PC-9 (cell line): ENCODE measurements at regions of chr13 and their contacts with region 1.

Region 1: GRCh38 chr13:97221989-97222700 is at the start of gene MBNL2:
- DNase-seq: peak; percentile 87 to 92
- H3K4me3 ChIP-seq: peak within 1 kb of the TSS; percentile 81
- H3K27ac ChIP-seq: peak within 1 kb of the TSS; percentile 85
- H3K4me1 ChIP-seq: peaks cover 48% of the 10 kb centered on the region
- H3K27me3 ChIP-seq: no peaks in the 10 kb centered on the region
- CTCF ChIP-seq: no peak
- total RNA-seq, gene MBNL2: 57.7 and 91.3 TPM in 2 replicates

Region 2: GRCh38 chr13:97030705-97031452 is 191.3 kb before region 1 on chr13:
- CTCF ChIA-PET with region 1: no interaction called
- POLR2A ChIA-PET with region 1: no interaction called
- intact Hi-C with region 1: no loop called
- DNase-seq: peak; percentile 2 to 66
- H3K4me3 ChIP-seq: no peak overlapping the region
- H3K27ac ChIP-seq: no peak overlapping the region
- H3K4me1 ChIP-seq: no peaks in the 10 kb centered on the region; the same call in 1 of the 2 replicates
- H3K27me3 ChIP-seq: no peaks in the 10 kb centered on the region
- CTCF ChIP-seq: peak; percentile 57

Region 3: DNA sequence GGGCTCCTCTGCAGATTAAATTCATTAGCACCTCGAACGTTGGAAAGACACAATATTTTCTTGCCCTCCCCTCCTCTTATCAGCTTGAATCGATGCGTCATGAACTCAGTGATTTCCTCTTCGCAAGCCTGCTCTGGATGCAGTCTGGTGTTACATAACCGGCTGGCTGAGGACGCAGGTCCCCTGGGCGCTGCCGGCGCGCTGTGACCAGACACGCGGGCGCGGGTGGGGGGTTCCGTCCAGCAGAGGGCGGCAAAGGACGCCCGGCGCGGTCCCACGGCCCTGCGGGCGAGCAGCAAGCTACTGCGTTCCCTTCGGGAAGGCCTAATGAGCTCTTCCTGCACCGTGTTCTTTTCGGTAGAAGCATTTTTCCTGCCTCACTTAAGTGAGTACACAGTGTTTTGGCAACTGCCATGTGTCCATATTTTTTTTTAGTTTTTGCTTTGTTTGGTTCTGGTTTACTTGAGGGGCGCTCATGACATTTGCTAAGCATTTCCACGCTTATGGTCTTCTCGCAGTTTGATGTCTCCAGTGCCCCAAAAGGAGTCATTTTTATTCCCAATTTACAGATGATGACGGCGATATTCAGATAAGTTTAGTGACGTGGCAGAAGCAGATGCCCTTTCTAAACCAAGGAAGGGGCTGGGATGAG is 112.2 kb before region 1 on chr13:
- CTCF ChIA-PET with region 1: interaction called, 12 read pairs
- POLR2A ChIA-PET with region 1: interaction called, 9 read pairs
- intact Hi-C with region 1: loop called (anchors 1 kb)
- DNase-seq: peak; percentile 95 to 96
- H3K4me3 ChIP-seq: peak overlapping the region; percentile 21; the same call in 1 of the 2 replicates
- H3K27ac ChIP-seq: peak overlapping the region; percentile 35; the same call in 1 of the 2 replicates
- H3K4me1 ChIP-seq: peaks cover 17% of the 10 kb centered on the region
- H3K27me3 ChIP-seq: no peaks in the 10 kb centered on the region
- CTCF ChIP-seq: peak; percentile 96

Region 4: DNA sequence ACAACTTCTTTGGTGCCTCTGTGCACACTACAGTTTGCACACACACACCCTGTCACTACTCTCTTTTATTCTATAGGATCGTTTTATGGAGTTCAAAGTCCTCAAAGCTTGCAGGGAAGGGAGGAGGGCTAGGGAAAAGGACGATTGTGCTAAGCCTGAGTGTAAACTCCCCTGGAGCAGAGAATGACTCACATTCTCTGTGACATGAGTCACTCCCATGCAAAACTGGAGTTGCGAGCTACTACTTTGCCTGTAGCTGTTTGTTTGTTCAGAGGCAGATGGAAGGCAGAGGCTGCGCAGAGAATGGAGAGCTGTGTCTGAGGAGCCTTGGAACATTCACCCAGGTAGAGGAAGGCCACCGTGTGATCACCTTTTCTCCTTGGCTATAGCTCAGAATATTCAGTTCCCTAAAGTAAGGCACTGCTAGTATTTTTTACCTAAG is 80.6 kb before region 1 on chr13:
- CTCF ChIA-PET with region 1: no interaction called
- POLR2A ChIA-PET with region 1: interaction called, 6 read pairs
- intact Hi-C with region 1: loop called (anchors 2 kb)
- DNase-seq: peak; percentile 70 to 95
- H3K4me3 ChIP-seq: peak overlapping the region; percentile 62
- H3K27ac ChIP-seq: peak overlapping the region; percentile 79
- H3K4me1 ChIP-seq: peaks cover 51% of the 10 kb centered on the region
- H3K27me3 ChIP-seq: no peaks in the 10 kb centered on the region
- CTCF ChIP-seq: no peak

Region 5: DNA sequence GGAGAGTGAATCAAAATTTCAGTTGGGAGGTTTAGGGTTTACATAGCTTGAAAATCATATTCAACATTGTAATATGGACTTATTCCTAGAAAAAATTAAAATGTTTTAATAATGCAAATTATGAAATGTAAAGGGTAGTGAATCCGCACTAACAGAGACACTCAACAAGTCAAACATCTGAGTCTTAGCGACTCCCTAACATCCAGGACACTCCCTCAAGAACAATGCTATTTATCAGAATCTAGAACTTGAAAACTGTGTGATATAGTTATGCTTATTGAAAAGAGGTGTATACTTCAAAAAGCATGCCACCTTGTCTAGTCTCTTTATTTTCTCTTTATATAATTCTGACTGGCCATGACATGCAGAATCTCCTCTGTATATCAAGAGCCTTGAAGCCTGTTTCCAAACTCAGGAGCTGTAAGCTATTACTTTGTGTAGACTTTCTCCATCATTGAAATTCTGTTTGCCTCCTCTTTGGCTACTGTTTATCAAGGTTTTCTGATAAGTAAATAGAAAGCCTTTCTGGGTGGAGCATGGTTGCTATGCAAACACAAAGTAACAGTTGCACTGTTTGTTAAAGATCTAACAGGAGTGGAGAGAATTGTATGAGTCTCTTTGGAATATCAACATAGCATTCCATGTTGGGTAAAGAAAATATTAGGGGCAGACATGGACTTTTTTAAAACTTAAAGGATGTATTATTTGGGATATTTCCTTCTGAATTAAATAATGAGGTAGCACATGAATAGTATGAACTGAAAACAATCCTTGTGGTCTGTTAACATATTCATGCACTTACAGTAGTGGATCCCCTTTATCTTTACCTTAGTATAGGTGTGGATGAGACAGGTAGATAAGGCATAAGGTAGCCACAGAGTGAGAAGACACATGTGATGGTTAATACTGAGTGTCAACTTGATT is 56.4 kb before region 1 on chr13:
- CTCF ChIA-PET with region 1: no interaction called
- POLR2A ChIA-PET with region 1: no interaction called
- intact Hi-C with region 1: no loop called
- DNase-seq: peak in 1 of 2 experiments; percentile 47
- H3K4me3 ChIP-seq: no peak overlapping the region
- H3K27ac ChIP-seq: no peak overlapping the region
- H3K4me1 ChIP-seq: peaks cover 8% of the 10 kb centered on the region
- H3K27me3 ChIP-seq: no peaks in the 10 kb centered on the region
- CTCF ChIP-seq: no peak

Region 6: DNA sequence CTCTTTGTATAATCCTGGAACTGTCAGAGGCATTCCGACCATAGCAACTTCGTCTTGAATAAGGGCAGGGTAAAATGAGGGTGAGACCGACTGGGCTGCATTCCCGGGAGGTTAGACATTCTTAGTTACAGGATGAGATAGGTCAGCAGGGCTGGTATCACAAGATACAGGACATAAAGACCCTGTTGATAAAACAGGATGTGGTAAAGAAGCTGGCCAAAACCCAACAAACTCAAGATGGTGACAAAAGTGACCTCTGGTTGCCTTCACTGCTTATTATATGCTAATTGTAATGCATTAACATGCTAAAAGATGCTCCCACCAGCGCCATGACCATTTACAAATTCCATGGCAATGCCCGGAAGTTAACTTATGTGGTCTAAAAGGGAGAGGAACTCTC is 27.7 kb before region 1 on chr13:
- CTCF ChIA-PET with region 1: no interaction called
- POLR2A ChIA-PET with region 1: interaction called, 7 read pairs
- intact Hi-C with region 1: loop called (anchors 1 kb)
- DNase-seq: peak; percentile 76 to 98
- H3K4me3 ChIP-seq: peak overlapping the region; percentile 27; the same call in 1 of the 2 replicates
- H3K27ac ChIP-seq: peak overlapping the region; percentile 85
- H3K4me1 ChIP-seq: peaks cover 79% of the 10 kb centered on the region
- H3K27me3 ChIP-seq: no peaks in the 10 kb centered on the region
- CTCF ChIP-seq: no peak

Region 7: DNA sequence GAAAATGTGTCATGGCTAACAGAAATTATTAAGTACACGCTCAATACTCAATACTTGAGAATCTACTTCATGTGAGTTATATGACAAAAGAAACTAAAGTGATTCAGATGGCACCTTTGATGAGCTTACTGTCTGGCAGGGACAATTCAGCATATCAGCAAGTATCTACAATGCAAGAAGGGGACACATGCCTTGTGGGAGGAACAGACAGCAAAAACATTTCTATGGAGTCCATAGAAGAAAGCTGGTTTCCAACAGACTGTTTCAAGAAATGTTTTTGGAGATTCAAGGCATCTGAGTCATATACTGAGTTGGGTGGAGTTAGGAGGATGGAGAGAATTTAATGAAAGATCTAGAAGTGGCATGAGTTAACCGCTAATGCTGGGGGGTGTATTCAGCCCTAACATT is 54.7 kb after region 1 on chr13:
- CTCF ChIA-PET with region 1: no interaction called
- POLR2A ChIA-PET with region 1: interaction called, 11 read pairs
- intact Hi-C with region 1: no loop called
- DNase-seq: no peak
- H3K4me3 ChIP-seq: no peak overlapping the region
- H3K27ac ChIP-seq: 0 out of 2 replicates have a peak overlapping the region, but pooled peaks have one; percentile 61
- H3K4me1 ChIP-seq: peaks cover 98% of the 10 kb centered on the region
- H3K27me3 ChIP-seq: no peaks in the 10 kb centered on the region
- CTCF ChIP-seq: no peak

Region 8: GRCh38 chr13:97432917-97433726 is 211.0 kb after region 1 on chr13:
- CTCF ChIA-PET with region 1: no interaction called
- POLR2A ChIA-PET with region 1: no interaction called
- intact Hi-C with region 1: loop called (anchors 2 kb)
- DNase-seq: peak; percentile 99 to 100
- H3K4me3 ChIP-seq: peak overlapping the region; percentile 100
- H3K27ac ChIP-seq: peak overlapping the region; percentile 99
- H3K4me1 ChIP-seq: peaks cover 25% of the 10 kb centered on the region
- H3K27me3 ChIP-seq: no peaks in the 10 kb centered on the region
- CTCF ChIP-seq: no peak